ENCODE measurements at regions of chr11 and their contacts with region 1.

Region 1: GRCh38 chr11:111841370-111842053 is 29.9 kb downstream of the ALG9 start:
- DNase-seq: peak; percentile 90
- ATAC-seq: peak; percentile 89

Region 2: DNA sequence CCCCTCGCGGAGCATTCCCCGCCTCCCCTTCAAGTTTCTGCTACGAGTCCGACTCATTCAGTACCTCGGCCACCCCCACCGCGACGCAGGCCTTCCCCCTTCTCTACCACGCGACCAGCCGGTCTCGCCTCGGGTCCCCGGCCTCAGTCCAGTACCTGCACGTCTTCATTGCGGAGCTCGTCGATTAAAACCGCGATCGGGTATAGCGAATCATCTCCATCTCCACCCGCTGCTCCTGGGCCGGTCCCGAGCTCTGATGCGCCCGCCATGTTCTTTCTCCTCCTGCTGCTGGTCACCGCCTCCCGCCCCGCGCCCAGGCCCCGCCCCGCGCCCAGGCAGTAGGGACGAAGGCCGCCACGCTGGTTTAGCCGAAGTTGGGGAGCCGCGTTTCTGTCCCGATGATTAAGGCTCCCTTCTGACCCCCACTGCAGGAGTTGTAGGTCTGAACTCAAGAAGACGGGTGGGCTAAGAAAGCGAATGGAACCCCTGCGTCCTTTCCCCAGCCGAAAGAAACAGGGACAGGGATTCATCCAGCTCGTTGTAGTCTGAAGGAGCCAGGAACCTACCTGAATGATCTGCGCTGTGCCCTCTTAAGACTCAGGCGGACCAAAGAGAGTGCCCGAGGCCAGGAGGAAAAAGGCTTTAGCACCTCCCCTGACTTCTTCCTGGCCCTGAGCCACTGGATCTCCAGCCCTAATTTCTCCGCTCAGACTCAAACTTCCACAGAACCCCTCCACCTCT is 75.2 kb before region 1 on chr11 and contains the start of gene PPP2R1B:
- intact Hi-C with region 1: loop called (anchors 10 kb)
- DNase-seq: peak; percentile 81
- ATAC-seq: peak; percentile 99
- total RNA-seq, gene PPP2R1B: 7.4 TPM